Mammary epithelial cell (primary cell): ENCODE measurements at regions of chr11 and their contacts with region 1.

Region 1: GRCh38 chr11:115504276-115505158 is at the start of gene CADM1:
- DNase-seq: peak; percentile 90
- H3K4me3 ChIP-seq: peak within 1 kb of the TSS; percentile 74 to 99 (median 83)
- H3K27ac ChIP-seq: peak within 1 kb of the TSS; percentile 61
- H3K4me1 ChIP-seq: peaks cover 19% of the 10 kb centered on the region
- H3K27me3 ChIP-seq: no peaks in the 10 kb centered on the region
- CTCF ChIP-seq: peak; percentile 50 to 83
- total RNA-seq, gene CADM1: 16.9 to 19.3 TPM

Region 2: DNA sequence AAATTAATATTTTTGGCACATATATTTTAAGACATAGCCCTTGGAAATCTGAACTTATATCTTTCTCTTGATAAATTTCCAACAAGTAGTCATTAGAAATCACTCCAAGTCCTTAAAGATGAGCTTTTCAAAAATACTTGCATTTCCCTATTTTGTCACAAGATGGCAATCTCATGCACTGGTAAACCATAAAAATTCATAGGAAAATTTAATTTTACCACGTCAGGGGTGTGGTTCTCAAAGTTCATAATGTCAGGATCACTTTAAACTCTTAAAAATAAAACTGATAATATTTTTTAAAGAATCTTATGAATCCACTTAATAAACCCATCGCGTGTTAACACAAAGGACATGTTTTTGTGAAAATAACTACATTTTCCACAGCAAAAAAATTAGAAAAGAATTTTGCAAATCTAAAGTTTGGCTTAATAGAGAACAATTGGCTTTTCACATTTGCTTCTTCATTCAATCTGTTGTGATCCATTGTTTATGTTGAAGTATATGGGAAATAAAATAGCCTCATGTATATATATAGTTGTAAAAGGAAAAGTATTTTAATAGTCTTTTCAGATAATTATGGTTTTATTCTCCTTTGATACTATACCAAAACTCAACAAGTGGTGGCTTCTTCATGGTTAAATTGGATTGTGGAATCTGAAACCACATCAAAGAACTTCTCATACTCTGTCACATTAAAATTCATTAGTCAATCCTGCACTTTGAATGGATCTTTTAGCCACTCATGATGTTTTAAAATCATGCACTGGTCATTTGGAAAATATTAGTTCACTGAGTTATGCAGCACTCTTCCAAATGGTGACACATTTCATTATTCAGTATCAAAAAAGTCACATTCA is 169.4 kb before region 1 on chr11:
- CTCF ChIA-PET with region 1: interaction called, 3 read pairs
- dilution Hi-C with region 1: no loop called
- in situ Hi-C with region 1: loop called (anchors 10 kb)
- intact Hi-C with region 1: loop called (anchors 1 kb)
- DNase-seq: peak; percentile 3
- H3K4me3 ChIP-seq: no peak overlapping the region
- H3K27ac ChIP-seq: no peak overlapping the region
- H3K4me1 ChIP-seq: peaks cover 4% of the 10 kb centered on the region
- H3K27me3 ChIP-seq: no peaks in the 10 kb centered on the region
- CTCF ChIP-seq: peak; percentile 64 to 71

Region 3: DNA sequence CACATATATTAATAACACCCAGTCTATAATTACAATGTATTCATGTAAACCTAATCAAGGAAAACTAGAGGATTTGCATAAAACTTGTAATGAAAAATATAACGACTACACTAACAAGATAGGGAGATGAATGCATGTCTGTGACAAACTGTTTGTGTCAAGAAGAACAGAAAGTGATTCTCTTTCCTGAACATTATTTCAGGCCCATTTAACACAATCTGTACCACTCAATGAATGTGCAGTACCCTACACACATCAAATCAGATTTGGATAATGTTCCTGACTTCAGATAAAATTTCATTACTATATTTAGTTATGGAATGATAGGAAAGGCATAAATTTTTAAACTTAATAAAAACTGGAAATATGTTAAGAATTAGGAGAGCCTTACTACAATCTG is 93.4 kb before region 1 on chr11:
- CTCF ChIA-PET with region 1: no interaction called
- dilution Hi-C with region 1: no loop called
- in situ Hi-C with region 1: no loop called
- intact Hi-C with region 1: no loop called
- DNase-seq: no peak
- H3K4me3 ChIP-seq: no peak overlapping the region
- H3K27ac ChIP-seq: no peak overlapping the region
- H3K4me1 ChIP-seq: no peaks in the 10 kb centered on the region
- H3K27me3 ChIP-seq: no peaks in the 10 kb centered on the region
- CTCF ChIP-seq: no peak

Region 4: GRCh38 chr11:115535781-115536180 is 31.3 kb after region 1 on chr11:
- CTCF ChIA-PET with region 1: no interaction called
- dilution Hi-C with region 1: no loop called
- in situ Hi-C with region 1: no loop called
- intact Hi-C with region 1: no loop called
- DNase-seq: no peak
- H3K4me3 ChIP-seq: no peak overlapping the region
- H3K27ac ChIP-seq: no peak overlapping the region
- H3K4me1 ChIP-seq: no peaks in the 10 kb centered on the region
- H3K27me3 ChIP-seq: no peaks in the 10 kb centered on the region
- CTCF ChIP-seq: no peak

Region 5: GRCh38 chr11:115614000-115614632 is 109.6 kb after region 1 on chr11:
- CTCF ChIA-PET with region 1: no interaction called
- dilution Hi-C with region 1: no loop called
- in situ Hi-C with region 1: no loop called
- intact Hi-C with region 1: loop called (anchors 2 kb)
- DNase-seq: peak; percentile 71
- H3K4me3 ChIP-seq: no peak overlapping the region
- H3K27ac ChIP-seq: no peak overlapping the region
- H3K4me1 ChIP-seq: peaks cover 30% of the 10 kb centered on the region
- H3K27me3 ChIP-seq: no peaks in the 10 kb centered on the region
- CTCF ChIP-seq: peak in 1 of 2 donors; percentile 40

Region 6: GRCh38 chr11:115659061-115659963 is 154.8 kb after region 1 on chr11:
- CTCF ChIA-PET with region 1: no interaction called
- dilution Hi-C with region 1: no loop called
- in situ Hi-C with region 1: no loop called
- intact Hi-C with region 1: loop called (anchors 10 kb)
- DNase-seq: peak; percentile 25
- H3K4me3 ChIP-seq: peak overlapping the region; percentile 19 to 49 (median 45)
- H3K27ac ChIP-seq: peak overlapping the region; percentile 10
- H3K4me1 ChIP-seq: peaks cover 16% of the 10 kb centered on the region
- H3K27me3 ChIP-seq: no peaks in the 10 kb centered on the region
- CTCF ChIP-seq: no peak

Region 7: GRCh38 chr11:116691771-116692177 is 1187.3 kb after region 1 on chr11:
- CTCF ChIA-PET with region 1: no interaction called
- dilution Hi-C with region 1: no loop called
- in situ Hi-C with region 1: no loop called
- intact Hi-C with region 1: loop called (anchors 5 kb)
- DNase-seq: no peak
- H3K4me3 ChIP-seq: no peak overlapping the region
- H3K27ac ChIP-seq: no peak overlapping the region
- H3K4me1 ChIP-seq: peaks cover 35% of the 10 kb centered on the region
- H3K27me3 ChIP-seq: no peaks in the 10 kb centered on the region
- CTCF ChIP-seq: peak; percentile 65 to 88